ENCODE measurements at regions of chr2 and their contacts with region 1.

Region 1: GRCh38 chr2:127486247-127487058 is 39.8 kb downstream of the IWS1 start:
- DNase-seq: no peak
- ATAC-seq: peak; percentile 72
- H3K4me3 ChIP-seq: no peak overlapping the region
- H3K27ac ChIP-seq: no peak overlapping the region
- H3K4me1 ChIP-seq: no peaks in the 10 kb centered on the region
- H3K27me3 ChIP-seq: no peaks in the 10 kb centered on the region
- CTCF ChIP-seq: no peak

Region 2: DNA sequence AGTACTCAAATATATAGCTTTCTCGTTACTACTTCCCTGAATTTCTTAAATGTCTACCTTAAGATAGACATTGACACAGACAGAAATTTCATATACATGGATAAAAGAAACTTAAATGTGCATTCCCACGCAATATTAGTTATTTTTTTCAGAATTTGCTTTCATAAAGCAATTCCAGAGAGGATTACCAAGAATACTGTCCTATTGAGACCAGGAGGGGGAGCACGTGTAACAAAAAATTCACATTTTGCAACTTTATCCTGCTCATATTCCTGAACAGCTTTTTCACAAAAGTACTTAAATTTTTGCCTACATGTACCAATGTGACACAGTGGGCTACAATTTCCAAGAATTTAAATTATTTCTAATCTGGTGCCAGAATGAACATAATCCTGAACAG is 161.8 kb before region 1 on chr2:
- intact Hi-C with region 1: loop called (anchors 10 kb)
- DNase-seq: no peak
- ATAC-seq: no peak
- H3K4me3 ChIP-seq: no peak overlapping the region
- H3K27ac ChIP-seq: no peak overlapping the region
- H3K4me1 ChIP-seq: no peaks in the 10 kb centered on the region
- H3K27me3 ChIP-seq: no peaks in the 10 kb centered on the region
- CTCF ChIP-seq: peak; percentile 55

Measured in upper lobe of right lung (tissue), 1 donor.